Astrocyte of the cerebellum (primary cell): ENCODE measurements at regions of chr1 and their contacts with region 1.

Region 1: GRCh38 chr1:16124377-16125087 is 31.3 kb downstream of the EPHA2 start:
- DNase-seq: no peak
- H3K4me3 ChIP-seq: no peak overlapping the region
- CTCF ChIP-seq: no peak

Region 2: GRCh38 chr1:16067127-16067768 is 57.3 kb before region 1 on chr1:
- in situ Hi-C with region 1: loop called (anchors 5 kb)
- DNase-seq: no peak
- H3K4me3 ChIP-seq: no peak overlapping the region
- CTCF ChIP-seq: no peak

Region 3: DNA sequence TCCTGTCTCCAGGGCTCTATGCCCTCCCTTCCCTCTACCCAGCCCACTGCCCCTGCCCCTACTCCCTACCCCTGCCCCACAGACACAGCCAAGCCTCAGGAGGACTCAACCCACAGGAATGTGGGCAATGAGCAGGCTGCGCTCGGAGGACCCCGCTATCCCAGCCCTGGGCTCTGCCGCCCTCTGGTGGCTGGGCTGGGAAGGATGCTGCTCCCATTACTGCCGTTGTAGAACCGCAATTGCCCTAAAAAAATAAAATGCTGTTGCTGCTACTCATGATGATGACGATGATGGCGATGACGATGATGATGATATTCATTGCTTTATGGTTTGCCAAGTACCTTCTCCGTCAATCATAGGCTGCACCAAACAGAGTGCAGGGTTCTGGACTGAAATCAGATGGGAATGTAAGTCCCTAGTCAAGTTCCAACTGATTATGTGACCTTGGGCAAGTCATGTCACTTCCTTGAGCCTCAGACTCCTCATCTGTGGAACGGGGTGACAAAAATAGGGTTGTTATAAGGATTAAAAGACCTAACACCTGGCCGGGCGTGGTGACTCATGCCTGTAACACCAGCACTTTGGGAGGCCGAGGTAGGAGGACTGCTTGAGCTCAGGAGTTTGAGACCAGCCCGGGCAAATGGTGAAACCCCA is 63.3 kb after region 1 on chr1:
- in situ Hi-C with region 1: no loop called
- DNase-seq: peak; percentile 59
- H3K4me3 ChIP-seq: no peak overlapping the region
- CTCF ChIP-seq: peak; percentile 96

Region 4: GRCh38 chr1:16217061-16217785 is 92.7 kb after region 1 on chr1:
- in situ Hi-C with region 1: loop called (anchors 5 kb)
- DNase-seq: peak; percentile 90
- H3K4me3 ChIP-seq: peak overlapping the region; percentile 39
- CTCF ChIP-seq: no peak

Region 5: GRCh38 chr1:16366722-16367257 is 242.3 kb after region 1 on chr1 and contains the start of gene SZRD1:
- in situ Hi-C with region 1: no loop called
- DNase-seq: peak; percentile 99
- H3K4me3 ChIP-seq: peak within 1 kb of the TSS; percentile 91
- CTCF ChIP-seq: no peak